Activated T-helper 1 cell treated with anti-CD3 and anti-CD28 coated beads, Interleukin-12 subunit alpha, Interleukin-12 subunit beta, Interleukin-2, Interleukin-4 antibody, amounts not matched to agents 30 ng/mL and 10 ng/mL and 1 ng/mL, durations not matched to agents 14 hours and 24 hours and 36 hours (primary cell): ENCODE measurements at regions of chr6 and their contacts with region 1.

Region 1: GRCh38 chr6:41787219-41787917 is at the start of gene TOMM6:
- DNase-seq: peak; percentile 95
- H3K4me3 Mint-ChIP-seq: peak within 1 kb of the TSS; percentile 97
- H3K27ac Mint-ChIP-seq: peak within 1 kb of the TSS; percentile 93
- H3K4me1 Mint-ChIP-seq: peaks cover 17% of the 10 kb centered on the region
- H3K27me3 Mint-ChIP-seq: peaks cover 12% of the 10 kb centered on the region
- total RNA-seq, gene TOMM6: 334 and 338 TPM in 2 replicates

Region 2: DNA sequence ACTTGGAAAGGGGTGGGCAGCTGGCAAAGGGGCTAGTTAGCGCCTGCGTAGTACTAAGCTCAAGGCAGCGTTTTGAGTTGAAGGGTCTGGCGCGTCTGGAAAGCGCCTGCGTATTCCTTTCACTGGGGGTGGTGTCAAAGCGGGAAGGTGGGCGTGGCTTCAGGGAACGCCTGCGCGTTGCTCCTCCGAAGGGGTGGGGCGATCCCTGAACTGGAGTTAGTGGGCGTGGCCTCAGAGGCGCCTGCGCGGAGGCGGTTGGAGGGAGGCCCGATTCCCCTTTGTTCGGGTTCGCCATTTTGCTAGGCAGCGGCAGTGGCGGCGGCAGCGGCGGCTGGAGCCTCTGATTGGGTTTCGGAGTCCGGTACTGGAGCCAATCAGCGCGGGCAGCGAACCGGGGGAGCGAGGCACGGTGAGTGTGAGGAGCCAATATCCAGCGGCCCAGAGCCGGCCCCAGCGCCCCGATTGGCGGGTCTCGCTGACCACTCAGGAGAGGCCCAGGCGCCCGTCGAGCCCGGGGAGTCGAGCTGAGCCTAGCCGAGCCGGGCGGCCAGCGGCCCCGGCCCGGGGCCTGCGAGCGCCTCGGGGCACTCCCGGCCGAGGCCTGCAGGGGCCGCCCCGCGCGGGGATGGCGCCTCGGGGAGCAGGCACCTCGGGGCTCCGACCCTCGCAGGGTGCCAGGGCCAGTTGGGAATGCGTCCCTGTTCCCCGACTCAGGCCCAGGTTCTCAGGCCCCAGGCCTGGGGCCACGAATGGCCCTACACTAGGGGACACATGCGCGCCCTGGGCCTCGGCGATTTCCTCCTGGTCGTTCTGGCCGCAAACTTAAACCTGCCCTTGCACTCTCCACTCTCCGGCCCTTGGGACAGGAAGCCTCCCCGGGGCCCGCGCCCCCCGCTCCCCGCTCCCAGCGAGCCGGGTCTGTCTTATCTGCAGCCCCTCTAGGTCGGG is 714.4 kb before region 1 on chr6 and contains the start of gene NFYA:
- intact Hi-C with region 1: loop called (anchors 2 kb)
- DNase-seq: peak; percentile 100
- H3K4me3 Mint-ChIP-seq: peak within 1 kb of the TSS; percentile 95
- H3K27ac Mint-ChIP-seq: peak within 1 kb of the TSS; percentile 99
- H3K4me1 Mint-ChIP-seq: peaks cover 66% of the 10 kb centered on the region
- H3K27me3 Mint-ChIP-seq: peaks cover 5% of the 10 kb centered on the region
- total RNA-seq, gene NFYA: 29.6 and 30.1 TPM in 2 replicates

Region 3: DNA sequence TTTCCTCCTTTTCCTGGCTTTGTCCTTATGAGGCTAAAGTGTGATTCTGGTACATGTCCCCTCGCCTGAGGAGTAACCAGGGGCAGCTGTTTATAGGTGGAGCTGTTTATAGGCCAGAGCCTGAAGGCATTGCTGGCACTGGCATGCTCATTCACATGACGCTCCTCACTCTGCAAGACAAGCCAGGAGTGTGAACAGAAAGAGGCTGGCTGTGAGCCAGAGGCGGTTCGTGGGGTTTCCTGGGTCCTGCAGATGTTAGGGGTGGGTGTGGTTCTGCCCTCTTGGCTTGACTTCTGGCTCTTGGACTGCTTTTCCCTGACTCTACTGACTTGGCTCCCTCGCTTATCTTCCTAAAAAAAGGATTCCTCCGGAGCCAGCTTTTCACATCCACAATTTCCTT is 161.9 kb before region 1 on chr6:
- intact Hi-C with region 1: no loop called
- DNase-seq: no peak
- H3K4me3 Mint-ChIP-seq: no peak overlapping the region
- H3K27ac Mint-ChIP-seq: no peak overlapping the region
- H3K4me1 Mint-ChIP-seq: peaks cover 6% of the 10 kb centered on the region
- H3K27me3 Mint-ChIP-seq: peaks cover 7% of the 10 kb centered on the region

Region 4: DNA sequence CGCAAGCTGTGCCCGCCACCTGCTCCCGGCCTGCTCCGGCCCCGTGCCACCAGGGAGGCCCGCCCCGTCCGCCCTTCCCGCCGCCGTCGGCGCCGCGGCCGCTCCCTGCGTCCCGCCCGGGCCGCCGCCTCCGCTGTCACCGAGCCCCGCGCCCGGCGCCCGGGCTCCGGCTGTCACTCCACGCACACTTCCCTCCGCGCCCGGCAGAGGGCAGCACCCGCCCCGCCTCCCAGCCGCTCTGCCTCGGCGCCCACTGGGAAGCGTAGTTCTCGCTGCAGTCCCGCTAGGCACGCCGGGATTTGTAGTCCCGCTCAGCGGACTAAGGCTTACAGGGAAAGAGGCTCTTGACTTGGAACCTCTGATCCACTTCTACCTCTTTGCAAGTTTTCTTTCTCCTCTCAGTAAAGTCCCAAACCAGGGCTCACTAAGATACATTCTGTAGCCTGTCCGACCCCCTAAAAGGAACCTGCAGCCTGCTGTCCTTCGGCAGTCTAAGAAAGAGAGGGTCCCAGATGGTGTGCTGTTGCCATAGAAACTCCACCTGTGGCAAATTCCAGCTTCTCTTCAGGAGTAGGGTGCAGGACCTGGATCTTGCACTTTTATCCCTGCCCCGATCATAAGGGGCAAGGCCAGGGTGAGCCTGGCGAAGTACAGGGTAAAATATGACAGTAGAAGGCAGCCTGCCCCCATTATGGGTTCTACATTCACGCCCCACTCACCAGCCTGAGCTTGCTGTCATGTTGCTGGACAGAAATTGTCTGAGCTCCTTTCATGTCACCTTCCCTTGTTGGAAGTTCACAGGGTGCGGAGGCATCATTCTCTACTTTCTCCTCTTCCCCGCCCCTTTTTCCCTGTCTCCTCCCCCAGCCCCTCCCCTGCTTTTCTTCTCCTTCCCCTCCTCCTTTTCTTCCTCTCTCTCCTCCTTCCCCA is 51.7 kb before region 1 on chr6 and contains the start of gene TFEB:
- intact Hi-C with region 1: loop called (anchors 1 kb)
- DNase-seq: peak; percentile 92
- H3K4me3 Mint-ChIP-seq: peak within 1 kb of the TSS; percentile 80
- H3K27ac Mint-ChIP-seq: peak within 1 kb of the TSS; percentile 31
- H3K4me1 Mint-ChIP-seq: peaks cover 23% of the 10 kb centered on the region
- H3K27me3 Mint-ChIP-seq: no peaks in the 10 kb centered on the region
- total RNA-seq, gene TFEB: 15.6 and 17.2 TPM in 2 replicates

Region 5: GRCh38 chr6:41767156-41767833 is 20.1 kb before region 1 on chr6:
- intact Hi-C with region 1: no loop called
- DNase-seq: no peak
- H3K4me3 Mint-ChIP-seq: no peak overlapping the region
- H3K27ac Mint-ChIP-seq: no peak overlapping the region
- H3K4me1 Mint-ChIP-seq: peaks cover 12% of the 10 kb centered on the region
- H3K27me3 Mint-ChIP-seq: peaks cover 5% of the 10 kb centered on the region

Region 6: GRCh38 chr6:41878246-41878645 is 90.9 kb after region 1 on chr6:
- intact Hi-C with region 1: no loop called
- DNase-seq: no peak
- H3K4me3 Mint-ChIP-seq: no peak overlapping the region
- H3K27ac Mint-ChIP-seq: no peak overlapping the region
- H3K4me1 Mint-ChIP-seq: no peaks in the 10 kb centered on the region
- H3K27me3 Mint-ChIP-seq: no peaks in the 10 kb centered on the region

Region 7: GRCh38 chr6:41920921-41921711 is 133.7 kb after region 1 on chr6 and contains the starts of genes BYSL and MED20:
- intact Hi-C with region 1: loop called (anchors 1 kb)
- DNase-seq: peak; percentile 89
- H3K4me3 Mint-ChIP-seq: peak within 1 kb of the TSS; percentile 98
- H3K27ac Mint-ChIP-seq: peak within 1 kb of the TSS; percentile 98
- H3K4me1 Mint-ChIP-seq: peaks cover 53% of the 10 kb centered on the region
- H3K27me3 Mint-ChIP-seq: no peaks in the 10 kb centered on the region
- total RNA-seq, gene BYSL: 82.9 and 88.5 TPM in 2 replicates
- total RNA-seq, gene MED20: 19.0 and 23.8 TPM in 2 replicates

Region 8: GRCh38 chr6:42050266-42051032 is 263.1 kb after region 1 on chr6 and contains the start of gene TAF8:
- intact Hi-C with region 1: loop called (anchors 1 kb)
- DNase-seq: peak; percentile 87
- H3K4me3 Mint-ChIP-seq: peak within 1 kb of the TSS; percentile 93
- H3K27ac Mint-ChIP-seq: peak within 1 kb of the TSS; percentile 92
- H3K4me1 Mint-ChIP-seq: peaks cover 58% of the 10 kb centered on the region
- H3K27me3 Mint-ChIP-seq: no peaks in the 10 kb centered on the region
- total RNA-seq, gene TAF8: 36.7 and 38.3 TPM in 2 replicates

Region 9: DNA sequence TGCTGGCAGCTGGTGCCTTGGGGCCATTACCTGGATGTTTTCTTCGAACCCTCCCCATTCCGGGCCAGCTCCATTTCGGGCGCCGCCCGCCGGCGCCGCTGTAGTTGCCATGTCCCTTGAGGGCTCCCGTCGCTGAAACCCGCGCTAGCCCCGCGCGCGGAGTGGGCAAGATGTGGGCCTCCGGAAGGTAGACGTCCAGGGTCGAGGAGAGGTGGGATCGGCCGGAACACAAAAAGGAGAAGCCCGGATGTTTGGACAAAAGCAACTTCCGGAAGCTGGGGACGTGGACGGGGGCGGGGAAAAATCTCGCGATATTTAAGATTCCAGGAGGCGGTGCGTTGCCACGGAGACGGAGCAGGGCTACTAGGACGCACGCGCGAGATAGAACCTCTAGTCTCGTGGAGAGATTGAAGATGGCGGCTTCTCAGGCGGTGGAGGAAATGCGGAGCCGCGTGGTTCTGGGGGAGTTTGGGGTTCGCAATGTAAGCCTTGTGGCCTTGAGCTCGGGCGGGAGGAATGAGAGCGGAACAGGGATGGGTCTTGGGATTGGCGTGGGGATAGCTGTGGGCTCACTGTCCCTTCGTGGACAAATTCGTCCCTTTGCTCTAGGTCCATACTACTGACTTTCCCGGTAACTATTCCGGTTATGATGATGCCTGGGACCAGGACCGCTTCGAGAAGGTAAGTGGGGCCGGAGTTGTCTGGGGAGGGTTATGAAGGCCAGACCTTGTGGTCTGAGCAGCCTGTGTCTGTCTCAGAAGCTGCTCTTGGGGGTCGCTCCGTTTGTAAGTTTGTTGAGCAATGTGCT is 1729.5 kb after region 1 on chr6 and contains the starts of genes POLR1C and YIPF3:
- intact Hi-C with region 1: loop called (anchors 5 kb)
- DNase-seq: peak; percentile 95
- H3K4me3 Mint-ChIP-seq: no peak within 1 kb of the TSS
- H3K27ac Mint-ChIP-seq: no peak within 1 kb of the TSS
- H3K4me1 Mint-ChIP-seq: peaks cover 20% of the 10 kb centered on the region
- H3K27me3 Mint-ChIP-seq: no peaks in the 10 kb centered on the region
- total RNA-seq, gene POLR1C: 85.8 and 98.0 TPM in 2 replicates
- total RNA-seq, gene YIPF3: 60.2 and 62.5 TPM in 2 replicates